Endothelial cell of umbilical vein (primary cell): ENCODE measurements at regions of chr16 and their contacts with region 1.

Region 1: GRCh38 chr16:58086426-58087208 is 42.6 kb downstream of the CFAP20 start:
- DNase-seq: no peak
- H3K4me3 ChIP-seq: no peak overlapping the region
- H3K27ac ChIP-seq: no peak overlapping the region
- H3K4me1 ChIP-seq: peaks cover 7% of the 10 kb centered on the region
- H3K27me3 ChIP-seq: no peaks in the 10 kb centered on the region
- CTCF ChIP-seq: no peak
- POLR2A ChIP-seq: no peak

Region 2: GRCh38 chr16:57925310-57925709 is 161.3 kb before region 1 on chr16:
- CTCF ChIA-PET with region 1: no interaction called
- POLR2A ChIA-PET with region 1: no interaction called
- dilution Hi-C with region 1: no loop called
- intact Hi-C with region 1: no loop called
- DNase-seq: no peak
- H3K4me3 ChIP-seq: no peak overlapping the region
- H3K27ac ChIP-seq: no peak overlapping the region
- H3K4me1 ChIP-seq: no peaks in the 10 kb centered on the region
- H3K27me3 ChIP-seq: peaks cover 5 to 7% of the 10 kb centered on the region in 2 experiments
- CTCF ChIP-seq: no peak
- POLR2A ChIP-seq: no peak

Region 3: GRCh38 chr16:58063377-58064076 is 23.1 kb before region 1 on chr16:
- CTCF ChIA-PET with region 1: interaction called, 6 read pairs
- POLR2A ChIA-PET with region 1: no interaction called
- dilution Hi-C with region 1: no loop called
- intact Hi-C with region 1: loop called (anchors 2 kb)
- DNase-seq: no peak
- H3K4me3 ChIP-seq: no peak overlapping the region
- H3K27ac ChIP-seq: no peak overlapping the region
- H3K4me1 ChIP-seq: peaks cover 4% of the 10 kb centered on the region
- H3K27me3 ChIP-seq: no peaks in the 10 kb centered on the region
- CTCF ChIP-seq: no peak
- POLR2A ChIP-seq: no peak

Region 4: DNA sequence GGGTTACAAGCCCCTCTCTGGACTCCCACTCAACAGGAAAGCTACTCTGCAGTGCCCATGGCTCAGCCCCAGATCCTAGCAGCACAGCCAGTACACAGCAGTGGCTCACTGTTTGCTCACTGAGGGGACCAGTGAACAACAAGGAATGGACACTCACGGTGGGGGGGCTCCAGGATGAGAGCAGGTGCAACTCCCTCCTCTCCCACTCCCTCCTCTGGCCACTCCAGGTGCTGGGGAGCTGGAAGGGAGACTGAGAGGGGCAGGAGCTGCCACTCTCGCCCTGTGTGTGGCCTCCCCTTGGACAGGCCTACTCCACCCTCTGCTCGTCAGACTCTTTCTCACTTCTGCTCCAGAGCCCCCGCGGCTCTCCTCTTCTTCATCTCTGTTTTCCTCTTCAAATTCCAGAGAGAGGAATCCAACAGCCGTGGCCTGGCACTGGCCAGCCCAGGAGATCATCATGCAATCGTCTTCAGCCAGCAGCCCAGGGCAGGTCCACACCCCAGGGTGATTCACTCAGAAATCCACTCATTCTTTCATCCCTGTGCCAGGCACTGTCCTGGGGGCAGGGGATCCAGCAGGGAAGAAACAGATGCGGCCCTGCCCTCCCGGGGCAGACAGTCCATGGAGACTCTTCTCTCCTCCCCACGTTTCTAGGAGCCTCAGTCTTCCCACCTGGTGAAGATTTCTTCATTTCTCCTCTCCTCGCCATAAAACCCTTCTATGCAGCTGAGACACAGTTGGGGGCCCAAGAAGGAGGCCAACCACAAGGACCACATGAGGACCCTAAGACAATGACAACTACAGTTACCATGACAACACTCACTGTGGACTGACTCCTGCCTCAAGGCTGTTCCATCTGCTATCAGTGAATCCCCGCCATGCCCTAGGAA is 11.8 kb after region 1 on chr16:
- CTCF ChIA-PET with region 1: interaction called, 10 read pairs
- POLR2A ChIA-PET with region 1: no interaction called
- dilution Hi-C with region 1: no loop called
- intact Hi-C with region 1: no loop called
- DNase-seq: no peak
- H3K4me3 ChIP-seq: no peak overlapping the region
- H3K27ac ChIP-seq: no peak overlapping the region
- H3K4me1 ChIP-seq: no peaks in the 10 kb centered on the region
- H3K27me3 ChIP-seq: no peaks in the 10 kb centered on the region
- CTCF ChIP-seq: no peak
- POLR2A ChIP-seq: no peak

Region 5: GRCh38 chr16:58236231-58236690 is 149.6 kb after region 1 on chr16:
- CTCF ChIA-PET with region 1: no interaction called
- POLR2A ChIA-PET with region 1: no interaction called
- dilution Hi-C with region 1: no loop called
- intact Hi-C with region 1: no loop called
- DNase-seq: peak; percentile 57
- H3K4me3 ChIP-seq: peak overlapping the region in 2 of 3 experiments; percentile 15 to 66
- H3K27ac ChIP-seq: no peak overlapping the region
- H3K4me1 ChIP-seq: peaks cover 5% of the 10 kb centered on the region
- H3K27me3 ChIP-seq: peaks cover 21 to 25% of the 10 kb centered on the region in 2 experiments
- CTCF ChIP-seq: no peak
- POLR2A ChIP-seq: no peak